Endothelial cell of umbilical vein (primary cell): ENCODE measurements at regions of chr15 and their contacts with region 1.

Region 1: GRCh38 chr15:40731034-40731433 is 24.0 kb downstream of the RMDN3 start:
- DNase-seq: peak; percentile 73
- H3K4me3 ChIP-seq: peak overlapping the region in 1 of 3 experiments; percentile 15
- H3K27ac ChIP-seq: peak overlapping the region; percentile 46
- H3K4me1 ChIP-seq: peaks cover 9% of the 10 kb centered on the region
- H3K27me3 ChIP-seq: no peaks in the 10 kb centered on the region
- CTCF ChIP-seq: no peak
- POLR2A ChIP-seq: no peak

Region 2: GRCh38 chr15:40702077-40702476 is 29.0 kb before region 1 on chr15:
- CTCF ChIA-PET with region 1: interaction called, 11 read pairs
- POLR2A ChIA-PET with region 1: no interaction called
- dilution Hi-C with region 1: no loop called
- intact Hi-C with region 1: no loop called
- DNase-seq: peak; percentile 43
- H3K4me3 ChIP-seq: no peak overlapping the region
- H3K27ac ChIP-seq: no peak overlapping the region
- H3K4me1 ChIP-seq: no peaks in the 10 kb centered on the region
- H3K27me3 ChIP-seq: no peaks in the 10 kb centered on the region
- CTCF ChIP-seq: peak; percentile 6 to 29
- POLR2A ChIP-seq: no peak

Region 3: DNA sequence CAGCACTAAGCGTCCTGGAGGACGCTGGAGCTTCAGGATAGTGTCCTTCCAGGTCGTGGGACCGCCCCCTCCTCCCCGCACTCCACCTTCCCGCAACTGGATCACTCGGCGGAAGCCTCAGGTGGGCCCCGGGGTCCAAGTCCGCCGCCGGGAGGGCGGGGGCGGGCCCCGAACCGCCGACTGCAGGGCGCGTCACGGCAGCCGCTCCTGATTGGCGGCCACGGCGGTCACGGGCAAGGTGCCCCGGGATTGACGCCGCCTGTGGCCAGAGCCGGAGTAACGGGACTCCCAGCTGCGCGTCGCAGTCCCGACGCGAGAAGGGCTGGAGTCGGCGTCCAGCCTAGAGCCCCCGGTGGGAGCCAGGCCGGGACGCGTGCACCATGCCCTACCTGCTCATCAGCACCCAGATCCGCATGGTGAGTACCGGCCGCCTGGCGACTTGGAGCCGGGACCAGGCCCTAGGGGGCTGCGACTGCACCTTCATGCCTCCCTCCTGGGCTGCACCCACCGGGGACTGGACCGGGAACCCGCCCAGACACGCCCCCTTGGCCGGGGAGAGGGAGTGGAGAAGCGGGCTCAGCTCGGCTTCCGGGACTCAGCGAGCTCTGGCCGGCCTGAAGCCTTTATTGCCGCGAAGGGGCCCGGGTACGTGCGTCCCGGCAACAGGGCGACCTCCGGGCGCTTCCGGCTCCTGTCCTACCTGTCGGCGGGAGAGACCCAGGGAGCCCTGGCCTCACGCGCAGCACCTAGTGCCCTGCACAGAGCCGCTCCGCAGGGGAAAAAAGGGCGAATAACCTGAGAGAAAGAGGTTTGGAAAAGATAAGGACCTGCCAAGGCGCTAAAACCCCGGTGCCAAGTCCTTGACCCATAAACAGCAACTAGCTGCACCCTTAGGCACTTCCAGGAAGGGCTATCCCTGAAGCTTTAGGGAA is 33.0 kb after region 1 on chr15 and contains the start of gene GCHFR:
- CTCF ChIA-PET with region 1: no interaction called
- POLR2A ChIA-PET with region 1: no interaction called
- dilution Hi-C with region 1: no loop called
- intact Hi-C with region 1: no loop called
- DNase-seq: peak; percentile 73
- H3K4me3 ChIP-seq: peak within 1 kb of the TSS in 2 of 3 experiments; percentile 25 to 32
- H3K27ac ChIP-seq: no peak within 1 kb of the TSS
- H3K4me1 ChIP-seq: peaks cover 31% of the 10 kb centered on the region
- H3K27me3 ChIP-seq: no peaks in the 10 kb centered on the region
- CTCF ChIP-seq: peak in 1 of 2 donors; percentile 59
- POLR2A ChIP-seq: no peak
- total RNA-seq, gene GCHFR: 5.5 and 6.3 TPM in 2 replicates